Psoas muscle (tissue), 8 donors: ENCODE measurements at regions of chr6 and their contacts with region 1.

Region 1: DNA sequence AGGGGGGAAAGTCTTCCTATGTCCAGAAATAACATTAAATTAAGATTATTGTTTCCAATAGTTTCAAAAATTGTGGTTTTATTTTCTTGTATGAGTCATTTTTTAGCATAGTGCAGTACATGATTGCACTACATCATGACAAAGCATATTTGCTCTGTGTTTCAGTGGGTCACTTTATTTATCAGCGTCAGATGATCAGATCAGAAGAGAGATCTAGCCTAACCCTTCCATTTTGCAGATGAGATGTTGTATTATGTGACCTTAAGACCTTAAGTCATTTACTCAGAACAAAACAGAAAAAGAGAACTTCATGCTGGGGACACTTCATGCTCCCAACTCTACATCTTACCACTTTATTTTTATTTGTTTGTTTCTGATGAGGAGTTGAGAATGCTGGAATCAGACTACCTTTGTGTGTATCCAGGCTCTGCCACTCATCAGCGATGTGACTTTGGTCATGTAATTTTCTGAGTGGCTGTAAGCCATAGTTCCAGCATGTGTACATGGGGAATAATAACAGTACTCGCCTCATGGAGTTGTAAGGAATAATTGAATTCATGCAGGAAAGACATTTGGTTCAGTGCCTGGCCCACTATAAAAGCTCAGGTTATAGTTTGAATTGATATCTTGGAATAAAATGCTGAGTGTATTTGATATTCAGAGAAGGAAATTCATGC is 13.5 kb downstream of the EYA4 start:
- DNase-seq: no peak
- ATAC-seq: peak in 3 of 4 donors; percentile 62 to 80 (median 69)
- H3K4me3 ChIP-seq: no peak overlapping the region
- H3K27ac ChIP-seq: peak overlapping the region; percentile 58
- H3K4me1 ChIP-seq: peaks cover 68% of the 10 kb centered on the region
- H3K27me3 ChIP-seq: no peaks in the 10 kb centered on the region
- CTCF ChIP-seq: no peak

Region 2: GRCh38 chr6:133502441-133503259 is 248.0 kb after region 1 on chr6:
- intact Hi-C with region 1: loop called in 1 of 2 experiments (anchors 5 kb)
- DNase-seq: peak; percentile 28 to 58
- ATAC-seq: peak; percentile 62 to 76 (median 75)
- H3K4me3 ChIP-seq: no peak overlapping the region
- H3K27ac ChIP-seq: peak overlapping the region; percentile 61
- H3K4me1 ChIP-seq: peaks cover 25% of the 10 kb centered on the region
- H3K27me3 ChIP-seq: no peaks in the 10 kb centered on the region
- CTCF ChIP-seq: no peak